ENCODE measurements at regions of chr6 and their contacts with region 1.

Region 1: DNA sequence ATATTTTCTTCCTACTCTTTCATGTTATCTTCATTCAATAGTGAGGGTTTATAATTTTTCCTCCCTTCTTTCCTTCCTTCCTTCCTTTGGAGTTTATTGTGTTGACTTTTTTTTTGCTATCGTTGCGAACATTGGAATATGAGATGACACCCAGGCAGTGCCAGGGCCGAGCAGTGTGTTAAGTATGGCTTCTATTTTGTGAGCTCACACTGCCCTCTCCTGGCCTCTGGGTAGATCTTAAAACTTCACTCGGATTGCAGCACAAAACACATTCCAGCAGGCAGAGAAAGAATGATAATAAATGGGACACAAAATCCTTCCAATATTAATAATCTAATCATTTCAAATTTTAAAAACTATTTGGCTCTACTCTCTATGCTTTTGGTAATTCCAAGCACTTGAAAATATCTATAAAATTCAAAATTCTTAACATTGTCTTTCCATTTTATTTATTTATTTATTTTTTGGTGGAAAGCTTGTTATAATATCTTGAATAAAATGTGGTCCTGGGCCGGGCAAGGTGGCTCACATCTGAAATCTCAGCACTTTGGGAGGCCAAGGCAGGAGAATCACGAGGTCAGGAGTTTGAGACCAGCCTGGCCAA is 147.4 kb upstream of the OLIG3 start:
- DNase-seq: peak; percentile 89
- H3K4me3 Mint-ChIP-seq: no peak overlapping the region
- H3K27ac Mint-ChIP-seq: no peak overlapping the region
- H3K4me1 Mint-ChIP-seq: peaks cover 13% of the 10 kb centered on the region
- H3K27me3 Mint-ChIP-seq: peaks cover 9% of the 10 kb centered on the region

Region 2: DNA sequence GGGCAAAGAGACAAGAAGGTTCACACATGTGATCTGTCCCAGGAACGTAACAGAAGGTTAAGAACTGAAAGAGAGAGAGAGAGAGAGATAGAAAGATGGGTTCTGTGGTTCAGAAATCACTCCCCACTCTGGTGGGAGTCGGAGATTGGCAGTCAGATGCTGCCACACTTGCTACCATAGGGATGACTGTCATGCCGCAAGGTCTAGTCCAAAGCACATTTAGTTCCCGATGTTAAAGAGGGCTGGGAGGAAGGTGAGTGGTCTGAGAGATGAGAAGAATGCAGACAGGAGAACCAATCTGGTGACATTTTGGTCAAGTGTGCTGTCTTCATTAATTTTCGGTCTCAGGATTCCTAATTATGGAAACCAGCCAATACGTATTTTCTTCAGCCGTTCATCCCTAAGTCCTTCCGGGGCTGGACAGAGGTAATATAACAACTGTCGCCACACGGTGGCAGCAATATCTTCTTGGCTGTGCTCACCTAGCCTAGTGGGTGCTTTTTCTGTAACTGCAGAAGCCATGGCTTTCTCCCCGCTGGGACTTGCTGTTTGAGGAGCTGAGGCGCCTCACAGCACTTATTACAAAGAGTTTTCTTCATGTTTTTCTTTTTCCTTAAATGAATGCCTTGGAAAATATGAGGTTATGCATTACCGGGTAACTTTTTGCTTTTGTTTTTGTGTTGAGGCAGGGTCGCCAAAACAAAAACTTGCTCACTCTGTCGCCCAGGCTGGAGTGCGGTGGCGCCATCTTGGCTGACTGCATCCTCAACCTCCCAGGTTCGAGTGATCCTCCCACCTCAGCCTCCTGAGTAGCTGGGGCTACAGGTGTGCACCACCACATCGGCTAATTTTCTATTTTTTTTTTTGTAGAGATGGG is 673.5 kb before region 1 on chr6:
- intact Hi-C with region 1: loop called (anchors 1 kb)
- DNase-seq: peak; percentile 88
- H3K4me3 Mint-ChIP-seq: no peak overlapping the region
- H3K27ac Mint-ChIP-seq: no peak overlapping the region
- H3K4me1 Mint-ChIP-seq: peaks cover 4% of the 10 kb centered on the region
- H3K27me3 Mint-ChIP-seq: peaks cover 50% of the 10 kb centered on the region

Region 3: DNA sequence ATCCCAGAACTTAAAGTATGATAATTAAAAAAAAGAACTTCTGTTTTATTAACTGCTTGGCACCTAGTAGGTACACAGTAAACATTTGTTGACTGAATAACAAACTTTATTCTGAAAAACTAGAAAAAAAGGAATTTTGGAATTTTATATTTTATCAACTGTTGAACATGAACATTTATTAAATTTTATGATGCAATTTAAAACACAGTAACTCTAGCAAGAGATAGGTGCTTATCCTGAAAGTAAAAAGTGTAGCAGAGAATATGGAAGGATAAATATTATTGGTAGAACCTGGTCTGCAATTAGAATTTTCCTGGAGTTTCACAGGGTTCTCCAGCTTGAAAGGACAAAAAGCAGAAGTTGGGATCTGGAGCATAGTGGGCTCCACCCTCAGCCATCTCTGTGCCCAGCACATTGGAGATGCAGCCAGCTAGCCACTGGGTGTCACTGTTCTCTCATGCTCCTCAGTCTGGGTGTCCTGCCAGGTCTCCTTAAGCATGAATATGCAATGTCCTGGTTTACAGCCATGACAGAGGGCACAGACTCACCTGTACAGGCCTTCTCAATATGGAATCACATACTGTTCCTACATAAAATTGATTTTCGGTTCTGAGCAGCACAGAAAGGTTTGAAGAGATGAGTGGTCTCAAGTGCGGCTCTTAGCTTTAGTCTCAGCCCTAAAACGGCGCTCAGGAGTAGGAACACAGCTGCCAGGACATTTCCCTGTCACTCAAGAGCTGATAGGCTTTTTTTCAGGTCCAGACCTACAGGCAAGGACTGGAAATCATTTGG is 565.1 kb before region 1 on chr6:
- intact Hi-C with region 1: loop called (anchors 1 kb)
- DNase-seq: peak; percentile 87
- H3K4me3 Mint-ChIP-seq: no peak overlapping the region
- H3K27ac Mint-ChIP-seq: no peak overlapping the region
- H3K4me1 Mint-ChIP-seq: no peaks in the 10 kb centered on the region
- H3K27me3 Mint-ChIP-seq: peaks cover 48% of the 10 kb centered on the region

Region 4: GRCh38 chr6:137271245-137272183 is 370.1 kb before region 1 on chr6:
- intact Hi-C with region 1: loop called (anchors 1 kb)
- DNase-seq: peak; percentile 64
- H3K4me3 Mint-ChIP-seq: no peak overlapping the region
- H3K27ac Mint-ChIP-seq: no peak overlapping the region
- H3K4me1 Mint-ChIP-seq: peaks cover 2% of the 10 kb centered on the region
- H3K27me3 Mint-ChIP-seq: peaks cover 27% of the 10 kb centered on the region

Region 5: GRCh38 chr6:137341681-137342195 is 299.8 kb before region 1 on chr6:
- intact Hi-C with region 1: loop called (anchors 1 kb)
- DNase-seq: peak; percentile 82
- H3K4me3 Mint-ChIP-seq: peak overlapping the region; percentile 26
- H3K27ac Mint-ChIP-seq: no peak overlapping the region
- H3K4me1 Mint-ChIP-seq: peaks cover 13% of the 10 kb centered on the region
- H3K27me3 Mint-ChIP-seq: peaks cover 36% of the 10 kb centered on the region

Region 6: DNA sequence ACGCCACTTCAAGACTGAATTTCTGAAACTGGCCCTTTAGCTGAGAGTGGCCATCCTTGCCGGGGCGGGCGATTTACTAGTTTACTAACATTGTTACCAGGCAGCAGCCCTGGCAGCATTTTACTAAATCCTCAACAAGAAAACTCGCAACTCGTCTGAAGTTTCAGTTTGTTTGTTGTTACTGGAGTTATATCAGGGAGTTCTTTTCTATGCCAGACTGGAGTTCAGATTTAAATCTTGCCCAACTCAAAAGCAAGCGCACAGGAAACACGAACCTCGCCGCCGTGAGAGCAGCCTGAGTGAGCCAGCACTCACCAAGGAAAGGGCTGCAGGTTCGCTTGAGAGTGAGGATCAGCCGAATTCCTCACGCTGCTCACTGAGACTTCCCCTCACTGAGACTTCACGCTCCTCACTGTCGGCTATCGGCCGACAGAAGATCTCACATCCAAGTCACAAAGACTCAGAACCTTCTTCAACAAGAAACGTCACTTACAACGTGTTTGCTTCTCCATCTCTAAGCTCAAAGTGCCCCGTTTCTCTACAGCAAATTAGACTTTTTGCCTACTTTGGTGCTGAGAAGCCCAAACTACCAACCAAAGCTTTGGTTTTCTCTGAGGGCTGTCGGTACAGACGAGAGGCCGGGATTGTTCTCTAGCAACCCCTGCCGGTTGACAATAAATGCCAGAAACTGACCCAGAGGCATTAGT is 226.3 kb before region 1 on chr6:
- intact Hi-C with region 1: loop called (anchors 10 kb)
- DNase-seq: peak; percentile 90
- H3K4me3 Mint-ChIP-seq: peak overlapping the region; percentile 79
- H3K27ac Mint-ChIP-seq: peak overlapping the region; percentile 38
- H3K4me1 Mint-ChIP-seq: peaks cover 9% of the 10 kb centered on the region
- H3K27me3 Mint-ChIP-seq: peaks cover 24% of the 10 kb centered on the region

Region 7: GRCh38 chr6:137497721-137498463 is 143.7 kb before region 1 on chr6:
- intact Hi-C with region 1: loop called (anchors 5 kb)
- DNase-seq: peak; percentile 67
- H3K4me3 Mint-ChIP-seq: peak overlapping the region; percentile 52
- H3K27ac Mint-ChIP-seq: no peak overlapping the region
- H3K4me1 Mint-ChIP-seq: peaks cover 30% of the 10 kb centered on the region
- H3K27me3 Mint-ChIP-seq: peaks cover 82% of the 10 kb centered on the region

Region 8: DNA sequence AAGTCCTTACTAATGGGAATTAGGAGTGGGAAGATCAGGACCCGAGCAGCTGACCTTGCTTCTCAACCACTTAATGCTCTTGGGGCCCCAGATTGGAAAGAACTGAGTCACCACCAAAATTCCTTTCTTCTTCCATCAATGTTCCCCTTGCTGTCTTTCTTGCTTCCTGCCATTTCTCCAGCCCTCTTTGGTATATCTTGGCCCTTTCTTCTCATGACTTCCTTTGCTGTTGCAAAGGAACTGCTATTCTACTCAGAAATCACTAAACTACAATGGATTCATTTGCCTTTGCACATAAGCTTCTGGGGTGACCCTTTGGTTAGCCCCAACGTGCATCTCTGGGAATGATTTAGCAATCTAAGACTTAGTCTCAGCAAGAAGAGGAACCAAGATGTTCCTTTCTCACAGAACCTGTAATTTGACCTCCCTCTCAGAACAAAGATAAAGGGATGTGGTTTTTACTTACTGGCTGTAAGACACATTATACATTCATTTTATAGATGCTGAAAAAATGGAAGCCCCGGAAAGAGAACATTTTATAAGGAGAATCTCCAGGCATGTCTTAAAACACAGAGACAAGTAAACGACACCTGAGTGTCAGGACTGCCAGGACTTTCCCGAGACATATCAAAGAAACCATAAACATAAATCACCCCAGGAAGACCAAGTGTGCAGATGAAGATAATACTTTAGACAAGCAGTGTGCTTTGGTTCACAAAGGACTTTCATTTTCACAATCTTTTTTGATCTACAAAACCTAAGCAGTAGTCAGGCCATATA is 126.5 kb after region 1 on chr6:
- intact Hi-C with region 1: no loop called
- DNase-seq: peak; percentile 73
- H3K4me3 Mint-ChIP-seq: peak overlapping the region; percentile 47
- H3K27ac Mint-ChIP-seq: peak overlapping the region; percentile 87
- H3K4me1 Mint-ChIP-seq: peaks cover 24% of the 10 kb centered on the region
- H3K27me3 Mint-ChIP-seq: no peaks in the 10 kb centered on the region

Measured in activated CD4-positive, alpha-beta T cell treated with anti-CD3 and anti-CD28 coated beads, Interleukin-2, amount 10 ng/mL, durations not matched to agents 24 days and 14 days (primary cell).